Mammary epithelial cell (primary cell): ENCODE measurements at regions of chr11 and their contacts with region 1.

Region 1: DNA sequence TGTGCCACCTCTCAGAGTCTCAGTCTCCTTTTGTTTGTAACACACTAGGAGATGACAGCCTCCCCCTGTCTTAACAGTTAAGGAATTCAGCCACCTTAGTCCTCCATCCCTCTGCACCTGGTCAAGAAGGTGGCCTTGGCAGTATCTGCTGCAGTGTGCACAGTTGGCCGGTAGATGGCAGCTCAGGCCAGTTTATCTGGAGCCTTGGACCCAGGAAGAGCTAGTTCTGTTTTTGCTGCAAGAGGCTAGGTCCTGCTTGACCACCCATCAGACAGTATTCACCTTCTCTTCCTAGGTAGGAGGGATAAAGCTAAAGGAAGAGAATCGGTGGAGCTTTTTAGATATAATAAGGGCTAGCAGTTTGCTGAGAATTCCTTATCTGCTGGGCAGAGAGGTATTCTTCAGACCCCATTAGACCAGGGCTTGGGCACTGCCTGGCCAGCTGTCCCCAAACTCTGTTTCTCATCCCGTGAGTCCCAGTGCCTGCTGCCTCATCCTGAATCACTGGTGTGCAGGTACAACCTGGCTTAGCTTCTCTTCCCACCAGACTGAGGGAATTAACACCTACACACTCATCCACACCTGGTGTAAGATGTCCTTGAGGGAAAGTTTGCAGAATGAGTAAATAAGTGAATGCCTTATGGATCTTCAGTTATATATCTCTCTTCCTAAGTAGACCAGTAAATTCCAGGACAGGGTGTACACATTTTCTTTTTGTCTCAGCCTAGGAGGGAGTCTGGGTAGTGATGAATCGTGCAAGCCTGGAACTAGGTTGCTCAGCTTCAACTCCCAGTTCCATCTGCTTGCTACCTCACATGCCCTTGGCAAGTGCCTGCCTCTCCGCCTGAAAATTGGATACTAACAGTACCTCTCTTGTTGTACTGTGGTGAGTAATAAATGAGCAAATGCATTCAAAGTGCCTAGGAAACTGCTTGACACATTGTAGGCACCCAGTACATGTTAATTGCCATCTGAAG is 70.8 kb upstream of the NARS2 start:
- DNase-seq: peak; percentile 74
- H3K4me3 ChIP-seq: no peak overlapping the region
- H3K27ac ChIP-seq: peak overlapping the region; percentile 42
- H3K4me1 ChIP-seq: peaks cover 14% of the 10 kb centered on the region
- H3K27me3 ChIP-seq: no peaks in the 10 kb centered on the region
- CTCF ChIP-seq: peak; percentile 93 to 98

Region 2: DNA sequence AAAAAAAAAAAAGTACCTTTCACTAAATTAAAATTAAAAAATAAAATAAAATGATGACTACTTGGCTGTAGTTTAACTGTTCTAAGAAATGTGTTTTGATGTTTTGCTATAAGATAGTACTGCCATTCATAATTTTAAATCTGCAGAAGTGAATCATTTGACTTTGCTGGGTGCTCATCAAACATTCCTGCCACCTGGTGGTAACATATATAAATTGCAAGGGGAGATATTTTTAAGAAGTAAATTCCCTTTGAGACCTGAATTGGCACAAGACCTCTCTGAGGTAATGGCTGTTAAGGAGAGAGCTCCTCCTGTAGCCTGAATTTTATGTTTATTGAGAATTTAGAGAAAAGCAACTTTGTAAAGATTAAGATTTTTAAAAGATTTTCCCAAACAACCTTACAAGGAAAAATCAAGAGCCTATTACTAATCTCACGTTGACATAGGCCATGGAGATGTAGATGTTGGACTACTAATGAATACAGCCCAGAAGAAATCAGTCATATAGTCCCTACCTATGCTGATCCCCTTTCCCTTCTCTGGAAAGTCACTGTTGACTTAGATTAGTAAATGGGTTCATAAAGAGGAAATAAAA is 59.0 kb before region 1 on chr11:
- CTCF ChIA-PET with region 1: no interaction called
- dilution Hi-C with region 1: no loop called
- in situ Hi-C with region 1: no loop called
- intact Hi-C with region 1: no loop called
- DNase-seq: no peak
- H3K4me3 ChIP-seq: no peak overlapping the region
- H3K27ac ChIP-seq: no peak overlapping the region
- H3K4me1 ChIP-seq: no peaks in the 10 kb centered on the region
- H3K27me3 ChIP-seq: no peaks in the 10 kb centered on the region
- CTCF ChIP-seq: peak; percentile 57 to 59

Region 3: GRCh38 chr11:78715639-78716311 is 70.3 kb after region 1 on chr11:
- CTCF ChIA-PET with region 1: interaction called, 94 read pairs
- dilution Hi-C with region 1: no loop called
- in situ Hi-C with region 1: loop called (anchors 5 kb)
- intact Hi-C with region 1: loop called (anchors 1 kb)
- DNase-seq: peak; percentile 95
- H3K4me3 ChIP-seq: no peak overlapping the region
- H3K27ac ChIP-seq: peak overlapping the region; percentile 41
- H3K4me1 ChIP-seq: peaks cover 24% of the 10 kb centered on the region
- H3K27me3 ChIP-seq: no peaks in the 10 kb centered on the region
- CTCF ChIP-seq: peak; percentile 72 to 87

Region 4: GRCh38 chr11:78961247-78961646 is 315.7 kb after region 1 on chr11:
- CTCF ChIA-PET with region 1: interaction called, 28 read pairs
- dilution Hi-C with region 1: loop called (anchors 10 kb)
- in situ Hi-C with region 1: loop called (anchors 5 kb)
- intact Hi-C with region 1: loop called (anchors 1 kb)
- DNase-seq: peak; percentile 60
- H3K4me3 ChIP-seq: no peak overlapping the region
- H3K27ac ChIP-seq: no peak overlapping the region
- H3K4me1 ChIP-seq: peaks cover 20% of the 10 kb centered on the region
- H3K27me3 ChIP-seq: no peaks in the 10 kb centered on the region
- CTCF ChIP-seq: peak; percentile 88 to 90

Region 5: GRCh38 chr11:79076526-79077115 is 431.1 kb after region 1 on chr11:
- CTCF ChIA-PET with region 1: interaction called, 3 read pairs
- dilution Hi-C with region 1: no loop called
- in situ Hi-C with region 1: no loop called
- intact Hi-C with region 1: loop called (anchors 1 kb)
- DNase-seq: peak; percentile 10
- H3K4me3 ChIP-seq: no peak overlapping the region
- H3K27ac ChIP-seq: no peak overlapping the region
- H3K4me1 ChIP-seq: no peaks in the 10 kb centered on the region
- H3K27me3 ChIP-seq: no peaks in the 10 kb centered on the region
- CTCF ChIP-seq: peak; percentile 52 to 63

Region 6: DNA sequence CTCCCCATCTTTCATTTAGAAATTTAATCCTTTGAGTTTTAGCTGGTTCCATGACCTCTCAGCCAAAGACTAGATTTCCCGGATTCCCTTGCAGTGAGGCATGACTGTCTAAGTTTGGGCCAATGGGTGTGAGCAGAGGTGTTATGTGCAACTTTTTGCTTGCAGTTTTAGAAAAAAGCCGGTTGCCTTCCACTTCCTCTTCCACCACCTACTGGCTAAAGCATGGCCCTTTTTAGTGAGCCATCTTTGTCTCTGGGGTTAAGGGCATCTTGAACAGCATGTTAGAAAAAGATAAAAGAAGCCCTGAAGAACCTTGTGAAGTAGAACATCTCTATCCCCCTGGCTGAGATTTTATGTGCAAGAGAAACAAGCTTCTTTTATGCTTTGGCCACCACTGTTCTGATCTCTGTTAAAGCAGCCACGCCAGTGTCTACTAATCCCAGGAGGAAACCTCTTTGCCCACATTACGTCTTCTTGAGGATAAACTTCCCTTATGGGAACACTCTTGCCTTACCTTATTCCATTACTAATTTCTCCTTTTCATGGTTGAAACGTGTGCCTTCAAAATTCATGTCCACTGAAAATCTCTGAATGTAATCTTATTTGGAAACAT is 515.4 kb after region 1 on chr11:
- CTCF ChIA-PET with region 1: no interaction called
- dilution Hi-C with region 1: no loop called
- in situ Hi-C with region 1: no loop called
- intact Hi-C with region 1: loop called (anchors 1 kb)
- DNase-seq: peak; percentile 60
- H3K4me3 ChIP-seq: no peak overlapping the region
- H3K27ac ChIP-seq: no peak overlapping the region
- H3K4me1 ChIP-seq: peaks cover 26% of the 10 kb centered on the region
- H3K27me3 ChIP-seq: no peaks in the 10 kb centered on the region
- CTCF ChIP-seq: no peak

Region 7: GRCh38 chr11:79493555-79494171 is 848.1 kb after region 1 on chr11:
- CTCF ChIA-PET with region 1: interaction called, 9 read pairs
- dilution Hi-C with region 1: no loop called
- in situ Hi-C with region 1: no loop called
- intact Hi-C with region 1: loop called (anchors 1 kb)
- DNase-seq: peak; percentile 50
- H3K4me3 ChIP-seq: no peak overlapping the region
- H3K27ac ChIP-seq: no peak overlapping the region
- H3K4me1 ChIP-seq: no peaks in the 10 kb centered on the region
- H3K27me3 ChIP-seq: no peaks in the 10 kb centered on the region
- CTCF ChIP-seq: peak; percentile 85 to 97